ENCODE measurements at regions of chr17 and their contacts with region 1.

Region 1: DNA sequence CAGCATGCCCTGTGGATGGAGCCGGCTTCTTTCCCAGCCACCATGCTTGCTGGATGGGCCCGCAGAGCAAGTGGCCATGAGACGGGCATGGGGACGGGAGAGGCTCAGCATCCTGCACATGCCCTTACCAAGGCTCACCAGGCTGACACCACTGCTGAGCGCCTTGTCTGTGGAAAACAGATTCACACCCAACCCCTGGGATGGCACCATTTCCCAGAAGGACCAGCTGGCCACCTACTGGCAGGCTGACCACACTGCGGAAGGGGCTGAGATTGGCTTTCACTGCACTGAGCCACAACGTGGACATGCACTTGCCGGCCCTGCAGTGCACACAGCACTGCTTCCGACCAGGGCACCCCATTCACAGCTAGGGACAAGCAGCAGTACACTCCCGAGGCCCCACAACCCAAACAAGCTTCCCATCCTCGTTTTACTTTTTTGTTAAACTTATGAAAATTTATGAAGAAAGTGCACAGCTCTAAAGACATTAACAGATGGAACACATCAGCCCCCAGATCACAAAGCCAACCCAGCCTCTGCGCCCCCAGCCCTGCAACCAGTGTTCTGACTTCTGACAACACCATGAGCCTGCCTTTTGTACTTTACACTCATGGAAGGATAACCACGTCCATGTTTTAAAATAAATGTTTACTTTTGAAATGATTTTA is 13.9 kb upstream of the KRTAP17-1 start:
- DNase-seq: peak; percentile 52
- ATAC-seq: peak; percentile 87
- H3K4me3 ChIP-seq: no peak overlapping the region
- H3K27ac ChIP-seq: no peak overlapping the region
- H3K4me1 ChIP-seq: no peaks in the 10 kb centered on the region
- H3K27me3 ChIP-seq: peaks cover 0 to 18% of the 10 kb centered on the region in 2 experiments; a peak in 2 of 5 replicates
- CTCF ChIP-seq: peak; percentile 96
- EP300 ChIP-seq: no peak
- POLR2A ChIP-seq: no peak
- RAD21 ChIP-seq: peak; percentile 89

Region 2: GRCh38 chr17:40862985-40863733 is 466.3 kb before region 1 on chr17:
- CTCF ChIA-PET with region 1: interaction called, 7 read pairs
- POLR2A ChIA-PET with region 1: no interaction called
- in situ Hi-C with region 1: loop called (anchors 5 kb)
- intact Hi-C with region 1: loop called (anchors 1 kb)
- DNase-seq: peak; percentile 48
- ATAC-seq: peak; percentile 97
- H3K4me3 ChIP-seq: no peak overlapping the region
- H3K27ac ChIP-seq: no peak overlapping the region
- H3K4me1 ChIP-seq: no peaks in the 10 kb centered on the region
- H3K27me3 ChIP-seq: no peaks in the 10 kb centered on the region; a peak in 1 of 5 replicates
- CTCF ChIP-seq: peak; percentile 88
- EP300 ChIP-seq: no peak
- POLR2A ChIP-seq: no peak
- RAD21 ChIP-seq: peak; percentile 69

Region 3: DNA sequence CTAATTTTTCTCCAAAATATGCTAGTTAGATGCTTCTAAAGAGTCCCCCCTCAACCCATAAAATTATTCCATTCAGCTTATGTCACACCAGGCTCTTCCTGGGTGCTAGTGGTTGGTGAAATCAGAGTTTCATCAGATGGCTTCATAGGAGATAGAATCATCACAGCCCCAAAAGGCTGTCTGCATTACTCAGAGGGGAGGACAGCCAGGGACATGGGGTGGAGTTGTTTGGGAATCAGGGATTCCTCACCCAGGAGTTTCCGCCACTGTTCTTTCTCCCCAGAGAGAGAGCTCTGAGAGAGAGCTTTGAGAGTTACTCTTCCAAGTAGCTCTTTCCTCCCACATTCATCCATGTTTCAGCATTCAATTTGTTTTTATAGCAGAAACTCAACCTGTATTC is 53.0 kb after region 1 on chr17:
- CTCF ChIA-PET with region 1: no interaction called
- POLR2A ChIA-PET with region 1: no interaction called
- in situ Hi-C with region 1: no loop called
- intact Hi-C with region 1: no loop called
- DNase-seq: no peak
- ATAC-seq: no peak
- H3K4me3 ChIP-seq: no peak overlapping the region
- H3K27ac ChIP-seq: no peak overlapping the region
- H3K4me1 ChIP-seq: 0 out of 2 replicates have a peak, but pooled peaks cover 4% of the 10 kb centered on the region
- H3K27me3 ChIP-seq: no peaks in the 10 kb centered on the region; a peak in 1 of 5 replicates
- CTCF ChIP-seq: no peak
- EP300 ChIP-seq: no peak
- POLR2A ChIP-seq: no peak
- RAD21 ChIP-seq: no peak